ENCODE measurements at regions of chr5 and their contacts with region 1.

Region 1: GRCh38 chr5:147223948-147224791 is 10.7 kb upstream of the STK32A start:
- DNase-seq: peak; percentile 33 to 54 (median 46)
- ATAC-seq: no peak
- H3K4me3 ChIP-seq: no peak overlapping the region
- H3K27ac ChIP-seq: no peak overlapping the region
- H3K4me1 ChIP-seq: no peaks in the 10 kb centered on the region
- H3K27me3 ChIP-seq: no peaks in the 10 kb centered on the region
- CTCF ChIP-seq: peak; percentile 29 to 76 (median 64)
- POLR2A ChIP-seq: no peak

Region 2: GRCh38 chr5:146653560-146653959 is 570.6 kb before region 1 on chr5:
- intact Hi-C with region 1: no loop called
- DNase-seq: no peak
- ATAC-seq: no peak
- H3K4me3 ChIP-seq: no peak overlapping the region
- H3K27ac ChIP-seq: no peak overlapping the region
- H3K4me1 ChIP-seq: no peaks in the 10 kb centered on the region
- H3K27me3 ChIP-seq: no peaks in the 10 kb centered on the region
- CTCF ChIP-seq: no peak
- POLR2A ChIP-seq: no peak

Region 3: DNA sequence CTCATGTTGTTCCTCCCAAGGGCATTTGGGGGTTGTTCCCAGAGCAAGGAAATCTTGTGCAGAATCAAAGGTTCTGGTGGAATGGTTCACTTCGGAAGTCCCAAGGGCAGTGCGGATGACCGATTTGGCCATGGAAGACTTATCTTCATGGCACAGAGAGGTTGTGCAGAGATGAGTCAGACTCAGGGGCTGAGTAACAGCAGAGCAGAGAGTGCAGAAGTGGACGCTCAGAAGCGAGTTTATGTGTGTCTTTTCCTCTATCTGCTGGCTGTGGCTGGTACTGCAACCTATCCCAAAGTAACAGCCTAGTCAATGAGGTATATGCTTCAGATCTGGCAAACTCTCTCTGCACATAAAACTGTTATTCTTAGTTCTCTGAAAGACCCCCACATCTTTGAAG is 167.6 kb after region 1 on chr5:
- intact Hi-C with region 1: loop called (anchors 10 kb)
- DNase-seq: peak; percentile 48 to 58 (median 53)
- ATAC-seq: peak; percentile 83
- H3K4me3 ChIP-seq: no peak overlapping the region
- H3K27ac ChIP-seq: no peak overlapping the region
- H3K4me1 ChIP-seq: no peaks in the 10 kb centered on the region
- H3K27me3 ChIP-seq: no peaks in the 10 kb centered on the region
- CTCF ChIP-seq: peak in 6 of 7 experiments; percentile 14 to 57 (median 53)
- POLR2A ChIP-seq: no peak

Region 4: DNA sequence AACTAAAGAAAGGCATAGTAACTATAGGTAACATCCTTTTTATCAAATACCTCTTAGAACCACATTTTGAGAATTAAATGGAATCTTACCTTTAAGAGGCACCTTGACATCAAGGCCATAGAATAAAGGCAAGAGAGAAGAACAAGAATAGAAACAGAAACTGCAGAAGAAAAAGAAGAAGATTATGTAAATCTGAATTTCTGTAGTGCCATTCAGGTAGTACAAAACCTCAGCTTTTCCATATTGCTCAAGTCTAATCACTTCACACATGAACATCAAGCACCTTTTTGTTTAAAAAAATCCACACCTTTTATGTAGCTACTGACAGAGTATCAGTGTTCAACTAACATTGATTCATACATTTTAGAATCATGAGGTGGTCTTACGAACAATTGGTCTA is 377.5 kb after region 1 on chr5:
- intact Hi-C with region 1: no loop called
- DNase-seq: no peak
- ATAC-seq: no peak
- H3K4me3 ChIP-seq: no peak overlapping the region
- H3K27ac ChIP-seq: no peak overlapping the region
- H3K4me1 ChIP-seq: no peaks in the 10 kb centered on the region
- H3K27me3 ChIP-seq: no peaks in the 10 kb centered on the region
- CTCF ChIP-seq: no peak
- POLR2A ChIP-seq: no peak